ENCODE measurements at regions of chr7 and their contacts with region 1.

Region 1: GRCh38 chr7:12436896-12437535 is 33.4 kb upstream of the VWDE start:
- DNase-seq: peak in 1 of 2 experiments; percentile 12
- H3K4me3 ChIP-seq: no peak overlapping the region
- H3K4me3 Mint-ChIP-seq: no peak overlapping the region
- H3K27ac Mint-ChIP-seq: no peak overlapping the region
- H3K4me1 ChIP-seq: no peaks in the 10 kb centered on the region
- H3K4me1 Mint-ChIP-seq: no peaks in the 10 kb centered on the region
- H3K27me3 ChIP-seq: no peaks in the 10 kb centered on the region
- H3K27me3 Mint-ChIP-seq: peaks cover 8% of the 10 kb centered on the region
- CTCF ChIP-seq: peak; percentile 12 to 24

Region 2: DNA sequence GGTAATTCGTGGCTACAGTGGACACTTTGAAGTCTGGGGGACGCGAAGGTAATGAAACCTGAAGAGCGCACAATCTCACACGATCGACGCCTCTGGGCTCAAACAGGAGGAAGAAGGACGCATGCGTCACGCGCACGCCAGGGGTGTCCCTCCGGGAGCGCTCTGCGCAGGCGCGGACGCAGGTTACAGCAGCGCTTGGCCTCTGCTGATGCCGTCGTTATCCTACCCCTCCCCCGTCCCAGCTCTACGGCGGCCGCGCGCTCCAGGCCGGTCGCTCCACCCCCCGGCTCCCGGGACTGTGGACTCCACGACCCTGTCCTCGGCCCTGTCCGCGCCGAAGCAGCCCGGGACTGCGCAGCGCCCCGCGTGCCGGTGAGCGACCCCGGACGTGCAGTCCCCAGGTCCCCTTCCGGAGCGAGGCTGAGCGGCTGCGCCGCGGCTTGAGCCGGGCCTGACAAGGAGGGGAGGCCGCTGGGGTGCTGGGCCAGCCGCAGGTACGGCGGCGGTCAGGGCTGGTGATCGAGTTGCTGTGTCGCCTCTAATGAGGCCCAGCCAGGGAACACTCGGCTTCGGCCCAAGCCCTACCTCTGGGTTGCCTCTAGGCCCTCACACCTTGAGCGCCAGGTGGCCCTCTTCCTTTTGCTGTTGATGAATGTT is 225.8 kb before region 1 on chr7 and contains the start of gene TMEM106B:
- CTCF ChIA-PET with region 1: no interaction called
- POLR2A ChIA-PET with region 1: no interaction called
- intact Hi-C with region 1: no loop called
- DNase-seq: peak; percentile 97 to 98
- H3K4me3 ChIP-seq: peak within 1 kb of the TSS; percentile 76
- H3K4me3 Mint-ChIP-seq: peak within 1 kb of the TSS; percentile 90
- H3K27ac Mint-ChIP-seq: peak within 1 kb of the TSS; percentile 92
- H3K4me1 ChIP-seq: peaks cover 4% of the 10 kb centered on the region; the same call in 1 of the 2 replicates
- H3K4me1 Mint-ChIP-seq: peaks cover 7% of the 10 kb centered on the region
- H3K27me3 ChIP-seq: no peaks in the 10 kb centered on the region
- H3K27me3 Mint-ChIP-seq: no peaks in the 10 kb centered on the region
- CTCF ChIP-seq: peak in 1 of 2 experiments; percentile 35
- total RNA-seq, gene TMEM106B: 38.6 and 46.8 TPM in 2 replicates

Region 3: DNA sequence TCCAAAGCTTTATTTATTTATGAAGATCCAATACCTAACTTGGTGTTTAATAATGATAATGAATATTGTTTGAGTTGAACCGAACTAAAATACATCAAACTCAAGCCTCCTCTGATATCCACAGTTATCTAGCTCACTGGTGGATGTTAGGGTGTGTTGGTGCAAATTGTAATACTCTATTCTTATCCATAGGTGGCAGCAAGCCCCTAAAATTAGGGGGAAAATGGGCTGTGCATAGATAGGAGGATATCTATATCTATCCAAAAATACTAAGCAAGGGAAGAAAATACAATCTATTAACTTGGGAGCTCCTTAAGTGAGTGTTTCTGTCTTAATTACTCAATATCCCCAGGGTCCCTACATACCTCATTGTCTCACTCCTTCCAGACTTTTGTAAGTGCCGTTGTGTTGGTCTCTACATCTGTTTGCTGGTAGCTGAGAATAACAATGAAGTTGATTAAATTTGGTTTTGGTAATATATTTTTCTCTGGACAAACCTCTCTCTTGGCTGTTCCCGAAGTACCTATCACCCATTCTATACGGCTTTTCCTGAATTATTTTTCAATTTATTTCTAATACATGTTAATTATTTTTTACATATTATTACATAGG is 21.6 kb after region 1 on chr7:
- CTCF ChIA-PET with region 1: interaction called, 14 read pairs
- POLR2A ChIA-PET with region 1: no interaction called
- intact Hi-C with region 1: no loop called
- DNase-seq: peak in 1 of 2 experiments; percentile 55
- H3K4me3 ChIP-seq: no peak overlapping the region
- H3K4me3 Mint-ChIP-seq: no peak overlapping the region
- H3K27ac Mint-ChIP-seq: no peak overlapping the region
- H3K4me1 ChIP-seq: no peaks in the 10 kb centered on the region
- H3K4me1 Mint-ChIP-seq: no peaks in the 10 kb centered on the region
- H3K27me3 ChIP-seq: no peaks in the 10 kb centered on the region
- H3K27me3 Mint-ChIP-seq: no peaks in the 10 kb centered on the region
- CTCF ChIP-seq: peak; percentile 69 to 79

Region 4: GRCh38 chr7:12469568-12469967 is 32.6 kb after region 1 on chr7:
- CTCF ChIA-PET with region 1: no interaction called
- POLR2A ChIA-PET with region 1: no interaction called
- intact Hi-C with region 1: no loop called
- DNase-seq: no peak
- H3K4me3 ChIP-seq: no peak overlapping the region
- H3K4me3 Mint-ChIP-seq: no peak overlapping the region
- H3K27ac Mint-ChIP-seq: no peak overlapping the region
- H3K4me1 ChIP-seq: no peaks in the 10 kb centered on the region
- H3K4me1 Mint-ChIP-seq: no peaks in the 10 kb centered on the region
- H3K27me3 ChIP-seq: no peaks in the 10 kb centered on the region; the same call in 1 of the 2 replicates
- H3K27me3 Mint-ChIP-seq: peaks cover 11% of the 10 kb centered on the region
- CTCF ChIP-seq: no peak